Colonic mucosa (tissue), 4 donors: ENCODE measurements at regions of chr1 and their contacts with region 1.

Region 1: GRCh38 chr1:206106328-206107167 is 10.6 kb downstream of the AVPR1B start:
- DNase-seq: peak; percentile 81
- H3K4me3 ChIP-seq: no peak overlapping the region
- H3K27ac ChIP-seq: no peak overlapping the region
- H3K4me1 ChIP-seq: no peaks in the 10 kb centered on the region
- H3K27me3 ChIP-seq: no peaks in the 10 kb centered on the region
- CTCF ChIP-seq: peak; percentile 87

Region 2: DNA sequence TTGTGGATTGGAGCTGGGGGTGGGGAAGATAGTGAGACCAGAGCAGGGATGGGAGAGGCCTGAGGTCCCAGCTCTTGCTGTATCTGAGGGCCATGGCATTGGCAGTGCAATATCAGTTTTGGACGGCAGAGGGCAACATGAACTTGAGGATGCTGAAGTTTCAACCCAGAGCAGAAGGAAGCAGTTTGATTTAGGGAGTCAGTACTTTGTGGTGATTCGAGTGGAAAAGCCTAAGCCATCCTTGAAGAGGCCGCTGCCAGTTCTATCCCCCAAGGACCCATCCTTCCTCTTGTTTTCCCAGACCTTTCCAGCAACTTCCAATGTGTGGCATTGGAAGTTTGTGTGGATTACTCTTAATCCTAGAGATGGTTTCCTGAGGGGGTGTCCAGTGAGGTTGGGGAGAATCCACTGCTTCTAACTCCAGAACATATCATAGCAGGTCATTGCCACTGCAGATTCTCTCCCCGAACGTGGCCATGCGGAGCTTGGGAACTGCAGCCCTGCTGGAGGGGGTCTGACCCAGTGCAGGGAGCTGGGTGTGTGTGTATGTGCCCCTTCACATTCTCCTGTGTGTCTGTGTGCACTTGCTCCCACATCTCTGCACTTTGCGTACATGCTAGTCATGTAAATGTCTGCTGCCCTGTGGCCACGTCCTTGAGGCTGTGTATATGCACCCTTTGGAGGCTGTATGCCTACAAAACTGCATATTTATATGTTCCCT is 187.4 kb before region 1 on chr1:
- intact Hi-C with region 1: loop called (anchors 5 kb)
- DNase-seq: peak; percentile 75
- H3K4me3 ChIP-seq: no peak overlapping the region
- H3K27ac ChIP-seq: no peak overlapping the region
- H3K4me1 ChIP-seq: no peaks in the 10 kb centered on the region
- H3K27me3 ChIP-seq: no peaks in the 10 kb centered on the region
- CTCF ChIP-seq: peak; percentile 89

Region 3: GRCh38 chr1:205983925-205984725 is 122.4 kb before region 1 on chr1:
- intact Hi-C with region 1: loop called (anchors 2 kb)
- DNase-seq: peak; percentile 46
- H3K4me3 ChIP-seq: no peak overlapping the region
- H3K27ac ChIP-seq: no peak overlapping the region
- H3K4me1 ChIP-seq: no peaks in the 10 kb centered on the region
- H3K27me3 ChIP-seq: no peaks in the 10 kb centered on the region
- CTCF ChIP-seq: peak; percentile 67

Region 4: DNA sequence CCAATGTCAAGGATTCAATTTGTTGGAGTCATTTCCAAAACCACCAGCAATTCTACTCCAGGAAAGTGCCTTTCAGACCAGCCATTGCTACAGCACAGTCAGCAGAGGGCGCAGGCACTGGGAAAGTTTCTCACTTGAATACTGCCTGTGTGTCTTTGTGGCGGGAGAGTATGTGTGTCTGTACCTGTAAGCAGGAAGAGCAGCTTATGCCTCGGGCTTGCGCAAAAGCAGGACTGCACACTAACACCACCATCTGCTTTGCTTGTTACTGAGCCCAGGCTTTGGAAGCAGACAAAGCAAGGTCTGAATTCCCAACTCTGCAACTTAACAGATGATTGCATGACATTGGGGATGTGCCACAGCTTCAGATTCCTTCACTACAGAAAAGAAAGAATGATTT is 75.8 kb before region 1 on chr1:
- intact Hi-C with region 1: loop called (anchors 1 kb)
- DNase-seq: peak; percentile 74
- H3K4me3 ChIP-seq: no peak overlapping the region
- H3K27ac ChIP-seq: no peak overlapping the region
- H3K4me1 ChIP-seq: no peaks in the 10 kb centered on the region
- H3K27me3 ChIP-seq: no peaks in the 10 kb centered on the region
- CTCF ChIP-seq: peak; percentile 71

Region 5: GRCh38 chr1:206066479-206067171 is 39.9 kb before region 1 on chr1:
- intact Hi-C with region 1: no loop called
- DNase-seq: no peak
- H3K4me3 ChIP-seq: no peak overlapping the region
- H3K27ac ChIP-seq: no peak overlapping the region
- H3K4me1 ChIP-seq: no peaks in the 10 kb centered on the region
- H3K27me3 ChIP-seq: no peaks in the 10 kb centered on the region
- CTCF ChIP-seq: no peak